Naive thymus-derived CD4-positive, alpha-beta T cell (primary cell): ENCODE measurements at regions of chr5 and their contacts with region 1.

Region 1: DNA sequence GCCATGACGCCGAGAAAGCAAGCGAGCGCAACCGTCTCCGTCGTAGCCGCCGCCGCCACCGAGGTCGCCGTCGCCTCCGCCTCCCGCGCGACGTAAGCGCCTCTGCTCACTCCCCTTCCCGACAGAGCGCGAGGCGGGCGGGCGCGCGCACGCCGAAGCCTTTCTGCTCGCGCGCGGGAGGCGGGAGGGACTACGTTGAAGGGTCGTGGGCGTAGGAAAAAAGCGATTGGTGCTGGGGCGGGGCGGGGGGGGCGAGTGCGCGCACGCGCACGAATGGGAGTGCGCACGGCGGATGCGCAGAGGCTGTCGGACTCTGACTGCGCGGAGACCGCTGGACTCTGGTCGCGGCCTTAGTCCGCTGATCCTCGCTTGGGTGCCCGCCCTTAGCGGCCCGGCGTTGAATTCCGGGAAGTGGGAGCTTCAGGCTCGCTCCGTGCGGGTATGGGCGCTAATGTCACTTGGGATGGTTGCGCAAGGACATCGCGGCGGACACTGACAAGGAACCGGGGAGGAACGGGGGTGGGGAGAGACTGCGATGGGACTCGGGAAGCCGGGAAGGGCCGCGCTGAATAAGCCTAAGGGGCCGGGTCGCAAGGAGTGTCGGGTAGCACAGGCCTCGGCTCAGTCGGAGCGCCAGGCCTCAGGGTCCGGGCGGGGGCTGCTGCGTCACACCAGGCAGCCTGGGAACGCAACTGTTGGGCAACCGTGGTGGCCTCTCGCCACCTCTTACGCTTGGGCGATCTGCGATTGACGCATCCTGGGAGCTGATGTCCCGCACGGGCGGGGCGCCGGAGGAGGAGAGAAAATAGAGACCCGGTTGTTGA is at the start of gene CHD1:
- DNase-seq: peak; percentile 91 to 98 (median 96)
- ATAC-seq: peak; percentile 83
- H3K4me3 ChIP-seq: peak within 1 kb of the TSS; percentile 96
- H3K4me3 Mint-ChIP-seq: peak within 1 kb of the TSS; percentile 93 to 99 (median 98)
- H3K27ac ChIP-seq: peak within 1 kb of the TSS; percentile 98
- H3K27ac Mint-ChIP-seq: peak within 1 kb of the TSS; percentile 94 to 100 (median 99)
- H3K4me1 ChIP-seq: peaks cover 42 to 44% of the 10 kb centered on the region in 2 donors
- H3K4me1 Mint-ChIP-seq: peaks cover 33 to 83% (median 70%) of the 10 kb centered on the region in 7 donors
- H3K27me3 ChIP-seq: no peaks in the 10 kb centered on the region
- H3K27me3 Mint-ChIP-seq: peaks cover 0 to 2% (median 0%) of the 10 kb centered on the region in 5 donors
- total RNA-seq, gene CHD1: 51.8 to 134 (median 92.4) TPM

Region 2: DNA sequence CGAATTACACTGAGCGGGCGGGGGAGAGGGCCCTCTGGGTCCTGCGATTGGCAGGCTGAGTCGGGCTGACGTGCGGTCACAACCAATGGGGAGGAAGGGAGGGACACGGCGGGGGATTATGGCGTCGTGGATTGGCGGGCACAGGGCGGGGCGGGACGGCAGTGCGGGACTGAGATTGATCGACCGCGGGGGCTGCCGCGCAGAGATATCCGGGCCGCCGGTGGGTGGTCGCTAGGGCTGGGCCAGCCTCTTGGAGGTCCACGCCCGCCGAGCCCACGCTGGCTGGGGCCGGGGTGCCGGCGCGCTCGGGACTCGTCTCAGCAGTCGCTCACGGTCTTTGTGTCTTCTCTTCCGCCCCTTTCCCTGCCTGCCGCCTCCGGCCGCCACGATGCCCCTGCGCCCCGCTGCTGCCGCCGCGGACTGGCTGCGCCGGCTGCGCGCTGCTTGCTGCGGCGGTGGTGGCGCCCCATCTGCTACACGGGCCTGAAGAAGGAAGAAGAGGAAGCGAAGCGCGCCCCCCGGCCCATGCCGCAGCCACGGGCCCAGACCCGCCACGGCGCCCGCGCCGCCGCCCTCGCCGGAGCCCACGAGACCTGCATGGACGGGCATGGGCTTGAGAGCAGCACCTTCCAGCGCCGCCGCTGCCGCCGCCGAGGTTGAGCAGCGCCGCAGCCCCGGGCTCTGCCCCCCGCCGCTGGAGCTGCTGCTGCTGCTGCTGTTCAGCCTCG is 155.5 kb before region 1 on chr5 and contains the start of gene RGMB:
- CTCF ChIA-PET with region 1: no interaction called
- POLR2A ChIA-PET with region 1: interaction called, 7 read pairs
- intact Hi-C with region 1: loop called (anchors 1 kb)
- DNase-seq: peak; percentile 63 to 93 (median 88)
- ATAC-seq: peak; percentile 92
- H3K4me3 ChIP-seq: peak within 1 kb of the TSS; percentile 88
- H3K4me3 Mint-ChIP-seq: peak within 1 kb of the TSS; percentile 89 to 100 (median 98)
- H3K27ac ChIP-seq: peak within 1 kb of the TSS; percentile 61
- H3K27ac Mint-ChIP-seq: peak within 1 kb of the TSS; percentile 75 to 98 (median 95)
- H3K4me1 ChIP-seq: peaks cover 19 to 28% of the 10 kb centered on the region in 2 donors
- H3K4me1 Mint-ChIP-seq: peaks cover 44 to 72% (median 65%) of the 10 kb centered on the region in 7 donors
- H3K27me3 ChIP-seq: peaks cover 0 to 4% of the 10 kb centered on the region in 2 donors
- H3K27me3 Mint-ChIP-seq: peaks cover 0 to 83% (median 7%) of the 10 kb centered on the region in 5 donors
- total RNA-seq, gene RGMB: 0.41 to 22.4 (median 18.7) TPM

Region 3: GRCh38 chr5:98940581-98940980 is 11.5 kb after region 1 on chr5:
- CTCF ChIA-PET with region 1: interaction called, 5 read pairs
- POLR2A ChIA-PET with region 1: interaction called, 59 read pairs
- intact Hi-C with region 1: loop called in 1 of 2 experiments (anchors 1 kb)
- DNase-seq: no peak
- ATAC-seq: no peak
- H3K4me3 ChIP-seq: no peak overlapping the region
- H3K4me3 Mint-ChIP-seq: peak overlapping the region in 3 of 10 donors; percentile 1 to 42 (median 4)
- H3K27ac ChIP-seq: no peak overlapping the region
- H3K27ac Mint-ChIP-seq: peak overlapping the region in 8 of 9 donors; percentile 21 to 83 (median 54)
- H3K4me1 ChIP-seq: peaks cover 0 to 25% of the 10 kb centered on the region in 2 donors
- H3K4me1 Mint-ChIP-seq: peaks cover 0 to 78% (median 64%) of the 10 kb centered on the region in 7 donors
- H3K27me3 ChIP-seq: no peaks in the 10 kb centered on the region
- H3K27me3 Mint-ChIP-seq: no peaks in the 10 kb centered on the region

Region 4: GRCh38 chr5:99032234-99033013 is 103.3 kb after region 1 on chr5:
- CTCF ChIA-PET with region 1: interaction called, 11 read pairs
- POLR2A ChIA-PET with region 1: interaction called, 89 read pairs
- intact Hi-C with region 1: loop called (anchors 1 kb)
- DNase-seq: peak in 3 of 9 donors; percentile 22 to 43 (median 38)
- ATAC-seq: peak; percentile 49
- H3K4me3 ChIP-seq: peak overlapping the region; percentile 43
- H3K4me3 Mint-ChIP-seq: peak overlapping the region; percentile 71 to 97 (median 88)
- H3K27ac ChIP-seq: peak overlapping the region; percentile 70
- H3K27ac Mint-ChIP-seq: peak overlapping the region; percentile 85 to 98 (median 96)
- H3K4me1 ChIP-seq: peaks cover 30 to 31% of the 10 kb centered on the region in 2 donors
- H3K4me1 Mint-ChIP-seq: peaks cover 32 to 87% (median 79%) of the 10 kb centered on the region in 7 donors
- H3K27me3 ChIP-seq: no peaks in the 10 kb centered on the region
- H3K27me3 Mint-ChIP-seq: no peaks in the 10 kb centered on the region

Region 5: DNA sequence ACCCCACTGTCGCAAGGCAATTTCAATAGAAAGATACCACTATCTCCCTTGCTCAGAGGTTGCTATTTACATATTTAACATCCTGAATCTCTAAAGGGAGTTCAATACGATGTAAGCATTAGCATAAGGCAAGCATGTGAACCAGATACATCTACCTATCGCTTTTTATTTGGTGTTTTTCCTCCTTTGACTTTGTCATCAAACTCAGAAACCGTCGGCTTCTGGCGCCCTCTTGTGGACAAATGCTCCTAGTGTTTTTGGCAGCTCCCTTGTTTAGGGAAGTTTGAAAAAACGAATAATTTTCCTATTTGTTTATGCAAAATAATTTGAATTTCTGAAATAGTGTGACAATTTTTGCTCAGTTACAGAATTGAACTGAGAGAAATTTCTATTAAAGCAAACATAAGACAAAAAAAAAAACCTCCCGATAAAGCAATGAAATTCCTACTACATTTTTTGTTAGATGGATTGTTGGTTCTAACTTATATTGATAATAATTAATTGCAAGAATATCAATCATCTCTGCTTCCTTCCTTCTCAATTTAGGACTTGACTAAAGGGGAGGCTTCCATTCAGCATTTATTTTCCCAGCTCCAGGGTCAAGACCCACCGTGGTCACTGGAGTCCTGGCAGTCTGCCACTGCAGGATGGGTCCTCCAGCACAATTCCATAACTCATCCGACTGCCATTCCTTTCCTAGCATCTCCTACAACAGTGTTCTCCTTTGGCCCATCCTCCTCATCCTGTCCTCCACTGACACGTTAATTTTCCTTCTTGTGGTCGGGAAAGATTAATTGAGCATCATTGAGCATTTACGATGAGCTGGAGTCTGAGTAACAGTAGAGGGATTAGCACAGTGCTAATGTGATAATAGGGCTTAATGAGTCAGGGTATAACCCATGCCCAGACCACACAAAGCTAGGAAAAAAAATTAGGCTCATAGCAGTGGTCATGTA is 131.5 kb after region 1 on chr5:
- CTCF ChIA-PET with region 1: interaction called, 11 read pairs
- POLR2A ChIA-PET with region 1: interaction called, 47 read pairs
- intact Hi-C with region 1: loop called (anchors 1 kb)
- DNase-seq: peak; percentile 66 to 86 (median 80)
- ATAC-seq: peak; percentile 87
- H3K4me3 ChIP-seq: no peak overlapping the region
- H3K4me3 Mint-ChIP-seq: peak overlapping the region in 5 of 10 donors; percentile 7 to 53 (median 29)
- H3K27ac ChIP-seq: no peak overlapping the region
- H3K27ac Mint-ChIP-seq: no peak overlapping the region
- H3K4me1 ChIP-seq: peaks cover 0 to 4% of the 10 kb centered on the region in 2 donors
- H3K4me1 Mint-ChIP-seq: peaks cover 0 to 18% (median 9%) of the 10 kb centered on the region in 7 donors
- H3K27me3 ChIP-seq: no peaks in the 10 kb centered on the region
- H3K27me3 Mint-ChIP-seq: peaks cover 0 to 20% (median 4%) of the 10 kb centered on the region in 5 donors

Region 6: GRCh38 chr5:99590861-99591260 is 661.8 kb after region 1 on chr5:
- CTCF ChIA-PET with region 1: no interaction called
- POLR2A ChIA-PET with region 1: no interaction called
- intact Hi-C with region 1: no loop called
- DNase-seq: no peak
- ATAC-seq: no peak
- H3K4me3 ChIP-seq: no peak overlapping the region
- H3K4me3 Mint-ChIP-seq: no peak overlapping the region
- H3K27ac ChIP-seq: no peak overlapping the region
- H3K27ac Mint-ChIP-seq: no peak overlapping the region
- H3K4me1 ChIP-seq: no peaks in the 10 kb centered on the region
- H3K4me1 Mint-ChIP-seq: no peaks in the 10 kb centered on the region
- H3K27me3 ChIP-seq: no peaks in the 10 kb centered on the region
- H3K27me3 Mint-ChIP-seq: no peaks in the 10 kb centered on the region

Region 7: DNA sequence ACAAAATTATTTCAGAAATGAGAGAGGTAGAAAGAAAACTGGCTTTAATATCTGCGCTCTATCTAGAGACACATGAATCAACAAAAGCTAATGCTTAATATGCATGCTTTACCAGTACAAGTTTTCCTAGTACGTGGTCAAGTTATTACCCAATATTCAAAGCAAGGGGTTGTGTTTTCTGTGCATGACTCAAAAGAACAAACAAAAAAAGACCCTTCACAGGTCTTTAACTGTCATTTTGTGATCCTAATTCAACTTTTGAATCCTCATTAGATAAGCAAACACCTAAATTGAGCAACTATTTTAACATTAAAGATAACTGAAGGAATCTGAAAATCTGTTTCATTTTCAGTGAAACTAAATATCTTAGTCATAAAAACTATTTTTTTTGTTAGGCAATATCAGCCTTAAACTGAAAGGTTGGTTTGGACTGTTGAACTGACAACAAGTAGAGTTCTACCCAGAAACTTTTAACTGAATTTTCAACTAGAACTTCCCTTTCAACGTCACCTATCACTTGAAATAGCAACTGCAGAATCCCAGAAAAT is 1961.5 kb after region 1 on chr5:
- CTCF ChIA-PET with region 1: no interaction called
- POLR2A ChIA-PET with region 1: no interaction called
- intact Hi-C with region 1: loop called in 1 of 2 experiments (anchors 5 kb)
- DNase-seq: no peak
- ATAC-seq: peak; percentile 47
- H3K4me3 ChIP-seq: peak overlapping the region; percentile 10
- H3K4me3 Mint-ChIP-seq: peak overlapping the region in 9 of 10 donors; percentile 6 to 81 (median 69)
- H3K27ac ChIP-seq: no peak overlapping the region
- H3K27ac Mint-ChIP-seq: peak overlapping the region; percentile 39 to 92 (median 72)
- H3K4me1 ChIP-seq: peaks cover 26 to 34% of the 10 kb centered on the region in 2 donors
- H3K4me1 Mint-ChIP-seq: peaks cover 27 to 83% (median 71%) of the 10 kb centered on the region in 7 donors
- H3K27me3 ChIP-seq: no peaks in the 10 kb centered on the region
- H3K27me3 Mint-ChIP-seq: no peaks in the 10 kb centered on the region